Dorsolateral prefrontal cortex (tissue), 120 donors: ENCODE measurements at regions of chr10 and their contacts with region 1.

Region 1: GRCh38 chr10:38094158-38094920 is at the start of gene ZNF37A:
- DNase-seq: peak; percentile 91 to 98 (median 94)
- H3K4me3 ChIP-seq: peak within 1 kb of the TSS; percentile 60 to 99 (median 92)
- H3K27ac ChIP-seq: peak within 1 kb of the TSS; percentile 13 to 96 (median 87)
- H3K27me3 ChIP-seq: no peaks in the 10 kb centered on the region
- CTCF ChIP-seq: peak in 39 of 56 donors; percentile 2 to 62 (median 37)
- total RNA-seq, gene ZNF37A: 24.5 to 48.8 (median 36.0) TPM

Region 2: GRCh38 chr10:37721100-37721499 is 373.2 kb before region 1 on chr10:
- intact Hi-C with region 1: no loop called
- DNase-seq: no peak
- H3K4me3 ChIP-seq: no peak overlapping the region
- H3K27ac ChIP-seq: no peak overlapping the region
- H3K27me3 ChIP-seq: peaks cover 0 to 7% (median 0%) of the 10 kb centered on the region in 45 donors
- CTCF ChIP-seq: no peak

Region 3: DNA sequence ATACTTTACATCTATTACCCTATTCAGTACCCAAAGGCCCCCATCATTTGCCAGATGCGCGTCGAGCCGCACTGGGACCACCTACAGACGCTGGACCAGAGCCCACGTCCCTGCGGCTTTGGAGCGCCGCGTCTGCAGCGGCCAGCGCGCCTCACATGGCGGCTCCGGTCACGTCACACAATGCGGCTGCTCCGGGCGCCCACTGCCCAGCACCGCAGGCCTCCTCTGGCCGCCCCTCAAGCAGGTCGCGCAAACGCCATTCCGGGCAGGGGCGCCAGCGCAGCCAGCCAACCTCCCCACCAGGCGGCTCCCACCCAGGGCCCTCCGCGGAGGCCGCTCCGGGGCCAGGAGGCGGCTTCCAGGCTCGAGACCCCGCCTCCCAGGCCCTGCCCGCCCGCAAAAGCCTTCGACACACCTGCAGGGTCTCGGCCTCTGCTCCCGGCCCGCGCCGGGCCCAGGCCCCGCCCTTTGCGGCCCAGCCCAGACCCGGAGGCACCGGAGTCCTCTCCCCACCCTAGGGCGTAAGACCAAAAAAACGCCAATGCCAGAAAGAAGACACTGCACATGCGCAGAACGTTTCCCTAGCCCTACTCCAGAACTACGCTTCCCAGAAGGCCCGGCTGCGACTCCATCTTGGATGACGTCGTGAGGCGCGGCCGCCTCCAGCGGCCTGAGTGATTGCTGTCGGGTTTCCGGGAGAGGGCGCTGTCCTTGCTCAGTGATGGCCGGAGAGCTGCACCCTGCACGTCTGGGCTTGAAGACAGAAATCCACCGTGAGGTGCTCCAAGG is 118.1 kb before region 1 on chr10 and contains the start of gene ZNF25:
- intact Hi-C with region 1: loop called (anchors 1 to 2 kb)
- DNase-seq: peak; percentile 95 to 99 (median 98)
- H3K4me3 ChIP-seq: peak within 1 kb of the TSS; percentile 57 to 99 (median 90)
- H3K27ac ChIP-seq: peak within 1 kb of the TSS; percentile 88 to 100 (median 98)
- H3K27me3 ChIP-seq: no peaks in the 10 kb centered on the region
- CTCF ChIP-seq: peak; percentile 61 to 95 (median 84)
- total RNA-seq, gene ZNF25: 32.1 to 95.5 (median 61.2) TPM